Heart right ventricle (tissue), 16 donors: ENCODE measurements at regions of chr4 and their contacts with region 1.

Region 1: DNA sequence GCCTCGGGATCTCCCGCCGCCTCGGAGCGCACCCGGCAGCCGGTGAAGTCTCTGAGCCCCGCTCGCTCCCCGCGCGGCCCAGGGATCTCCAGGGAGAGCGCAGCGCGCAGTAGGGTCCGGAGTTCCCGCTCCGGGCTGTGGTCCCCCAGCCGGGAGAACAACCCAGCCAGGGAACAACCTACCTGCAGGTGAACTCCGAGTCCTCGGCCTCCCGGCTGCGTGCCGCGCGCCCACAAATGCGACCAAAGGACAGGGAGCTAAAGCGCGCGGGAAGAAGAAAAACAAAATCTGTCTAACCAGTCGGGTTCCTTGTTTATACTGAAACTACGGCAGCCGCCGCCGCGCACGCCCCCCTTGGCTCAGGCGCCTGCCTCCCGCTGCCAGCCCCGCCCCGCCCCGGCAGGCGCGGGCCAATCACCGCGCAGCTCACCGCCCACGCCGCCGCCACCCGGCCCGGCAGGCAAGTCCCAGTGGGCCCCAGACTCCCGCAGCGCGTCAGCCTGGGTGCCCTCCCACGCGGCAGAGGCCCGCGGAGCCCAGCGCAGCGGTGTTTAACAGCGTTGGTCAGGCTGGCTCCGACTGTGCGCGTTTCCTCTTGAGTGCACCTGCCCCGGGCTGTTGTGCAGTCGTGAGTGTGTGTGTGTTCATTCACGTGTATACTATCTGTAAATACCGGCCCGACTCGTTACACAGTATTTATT is at the start of gene RASGEF1B:
- DNase-seq: peak; percentile 88 to 90
- ATAC-seq: peak; percentile 96 to 100 (median 97)
- H3K4me3 ChIP-seq: peak within 1 kb of the TSS; percentile 63 to 98 (median 88)
- H3K27ac ChIP-seq: peak within 1 kb of the TSS; percentile 66 to 91 (median 82)
- H3K4me1 ChIP-seq: peaks cover 0 to 49% (median 21%) of the 10 kb centered on the region in 9 donors
- H3K27me3 ChIP-seq: no peaks in the 10 kb centered on the region
- CTCF ChIP-seq: no peak
- total RNA-seq, gene RASGEF1B: 2.4 to 8.1 (median 3.4) TPM

Region 2: GRCh38 chr4:81412946-81413495 is 58.7 kb before region 1 on chr4:
- intact Hi-C with region 1: loop called in 3 of 10 experiments (anchors 5 to 10 kb)
- DNase-seq: no peak
- ATAC-seq: no peak
- H3K4me3 ChIP-seq: no peak overlapping the region
- H3K27ac ChIP-seq: no peak overlapping the region
- H3K4me1 ChIP-seq: no peaks in the 10 kb centered on the region
- H3K27me3 ChIP-seq: no peaks in the 10 kb centered on the region
- CTCF ChIP-seq: no peak

Region 3: DNA sequence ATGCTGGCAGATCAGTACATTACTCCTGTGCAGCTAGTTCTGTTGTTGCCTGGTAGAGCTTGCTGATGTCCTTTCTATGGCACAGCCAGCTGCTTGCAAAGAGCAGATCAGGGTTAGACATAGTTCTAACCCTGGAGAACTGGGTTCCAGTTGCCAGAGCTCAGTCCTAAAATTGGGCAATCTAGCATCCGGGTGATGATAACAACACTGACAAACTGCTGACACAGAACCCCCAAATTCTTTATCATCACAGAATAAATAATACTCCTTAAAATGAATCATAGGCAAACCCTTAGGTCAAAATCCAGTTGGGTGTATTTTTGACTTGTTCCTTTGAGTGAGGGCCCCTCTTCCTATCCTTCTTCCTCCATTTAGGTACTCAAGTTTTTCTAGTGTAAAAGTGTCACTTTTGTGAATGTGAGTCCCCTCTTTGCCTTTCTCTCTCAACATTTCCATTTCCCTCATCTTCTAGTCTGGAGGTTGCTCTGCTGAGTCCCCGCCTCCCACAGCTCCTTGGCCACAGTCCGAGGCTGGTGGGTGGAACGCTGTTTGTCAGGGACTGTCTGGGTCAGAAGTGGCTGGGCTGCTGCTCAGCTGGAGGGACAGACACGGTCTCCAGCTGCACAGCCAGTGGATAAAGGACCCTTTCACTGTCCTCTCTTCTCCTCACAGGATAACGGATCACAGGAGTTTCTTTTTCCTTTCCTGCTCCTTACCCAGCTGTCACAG is 93.6 kb after region 1 on chr4:
- intact Hi-C with region 1: loop called in 1 of 10 experiments (anchors 10 kb)
- DNase-seq: peak; percentile 84 to 88
- ATAC-seq: peak; percentile 93 to 98 (median 98)
- H3K4me3 ChIP-seq: peak overlapping the region in 8 of 10 donors; percentile 10 to 42 (median 30)
- H3K27ac ChIP-seq: peak overlapping the region; percentile 58 to 87 (median 74)
- H3K4me1 ChIP-seq: peaks cover 0 to 31% (median 6%) of the 10 kb centered on the region in 9 donors
- H3K27me3 ChIP-seq: no peaks in the 10 kb centered on the region
- CTCF ChIP-seq: no peak

Region 4: GRCh38 chr4:81688085-81688484 is 216.3 kb after region 1 on chr4:
- intact Hi-C with region 1: loop called in 1 of 10 experiments (anchors 10 kb)
- DNase-seq: no peak
- ATAC-seq: no peak
- H3K4me3 ChIP-seq: no peak overlapping the region
- H3K27ac ChIP-seq: no peak overlapping the region
- H3K4me1 ChIP-seq: peaks cover 0 to 11% (median 0%) of the 10 kb centered on the region in 9 donors
- H3K27me3 ChIP-seq: peaks cover 0 to 3% (median 0%) of the 10 kb centered on the region in 7 donors
- CTCF ChIP-seq: peak in 4 of 9 donors; percentile 12 to 18 (median 14)

Region 5: GRCh38 chr4:82201805-82202641 is 730.3 kb after region 1 on chr4:
- intact Hi-C with region 1: loop called in 6 of 10 experiments (anchors 5 to 10 kb)
- DNase-seq: peak in 1 of 2 donors; percentile 22
- ATAC-seq: no peak
- H3K4me3 ChIP-seq: no peak overlapping the region
- H3K27ac ChIP-seq: no peak overlapping the region
- H3K4me1 ChIP-seq: no peaks in the 10 kb centered on the region
- H3K27me3 ChIP-seq: no peaks in the 10 kb centered on the region
- CTCF ChIP-seq: peak in 8 of 9 donors; percentile 30 to 67 (median 55)